Left ventricle myocardium superior (tissue), 1 donor: ENCODE measurements at regions of chr20 and their contacts with region 1.

Region 1: GRCh38 chr20:38751360-38751976 is 3.2 kb downstream of the ACTR5 start:
- DNase-seq: no peak
- ATAC-seq: no peak

Region 2: GRCh38 chr20:38645980-38646858 is 105.2 kb before region 1 on chr20:
- intact Hi-C with region 1: loop called (anchors 5 kb)
- DNase-seq: peak; percentile 81
- ATAC-seq: peak; percentile 94

Region 3: GRCh38 chr20:38985603-38986170 is 234.2 kb after region 1 on chr20:
- intact Hi-C with region 1: no loop called
- DNase-seq: no peak
- ATAC-seq: peak; percentile 91